Activated CD4-positive, alpha-beta T cell treated with anti-CD3 and anti-CD28 coated beads for 36 hours (primary cell): ENCODE measurements at regions of chr9 and their contacts with region 1.

Region 1: GRCh38 chr9:419571-420402 is 205.1 kb downstream of the DOCK8 start:
- DNase-seq: no peak
- ATAC-seq: no peak
- H3K4me3 Mint-ChIP-seq: no peak overlapping the region
- H3K27ac Mint-ChIP-seq: no peak overlapping the region
- H3K4me1 Mint-ChIP-seq: no peaks in the 10 kb centered on the region
- H3K27me3 Mint-ChIP-seq: no peaks in the 10 kb centered on the region

Region 2: DNA sequence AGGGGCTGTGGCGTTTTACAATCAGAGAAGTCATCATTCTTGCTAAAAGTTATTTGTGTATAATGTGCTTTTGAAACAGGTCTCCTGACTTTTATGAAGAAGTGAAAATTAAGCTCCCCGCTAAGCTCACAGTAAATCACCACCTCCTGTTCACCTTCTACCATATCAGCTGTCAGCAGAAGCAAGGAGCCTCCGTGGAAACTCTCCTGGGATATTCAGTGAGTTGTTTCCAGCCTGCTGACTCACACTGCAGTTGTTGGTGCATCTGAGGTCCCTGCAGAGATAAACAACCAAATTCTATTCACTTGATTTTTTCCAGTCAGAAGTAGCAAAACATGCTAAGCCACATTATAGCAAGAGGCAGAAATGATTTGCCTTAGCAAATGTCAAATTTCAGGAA is 48.4 kb before region 1 on chr9:
- CTCF ChIA-PET with region 1: no interaction called
- POLR2A ChIA-PET with region 1: no interaction called
- intact Hi-C with region 1: loop called in 1 of 2 experiments (anchors 5 kb)
- DNase-seq: no peak
- ATAC-seq: no peak
- H3K4me3 Mint-ChIP-seq: no peak overlapping the region
- H3K27ac Mint-ChIP-seq: peak overlapping the region; percentile 44
- H3K4me1 Mint-ChIP-seq: no peaks in the 10 kb centered on the region
- H3K27me3 Mint-ChIP-seq: no peaks in the 10 kb centered on the region

Region 3: GRCh38 chr9:441126-441525 is 21.3 kb after region 1 on chr9:
- CTCF ChIA-PET with region 1: interaction called, 3 read pairs
- POLR2A ChIA-PET with region 1: no interaction called
- intact Hi-C with region 1: loop called in 1 of 2 experiments (anchors 2 kb)
- DNase-seq: no peak
- ATAC-seq: no peak
- H3K4me3 Mint-ChIP-seq: no peak overlapping the region
- H3K27ac Mint-ChIP-seq: no peak overlapping the region
- H3K4me1 Mint-ChIP-seq: peaks cover 4% of the 10 kb centered on the region
- H3K27me3 Mint-ChIP-seq: no peaks in the 10 kb centered on the region

Region 4: DNA sequence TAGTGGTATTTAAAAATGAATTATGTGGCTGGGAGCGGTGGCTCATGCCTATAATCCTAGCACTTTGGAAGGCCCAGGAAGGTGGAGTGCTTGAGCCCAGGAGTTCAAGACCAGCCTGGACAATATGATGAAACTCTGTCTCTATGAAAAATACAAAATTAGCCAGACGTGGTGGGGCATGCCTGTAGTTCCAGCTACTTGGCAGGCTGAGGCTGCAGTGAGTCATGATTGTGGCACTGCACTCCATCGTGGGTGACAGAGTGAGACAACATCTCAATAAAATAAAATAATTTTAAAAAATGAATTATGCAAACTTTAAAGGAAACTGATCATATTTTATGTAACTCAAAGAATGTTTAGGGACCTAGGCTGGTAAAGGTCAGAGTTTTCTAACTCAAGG is 110.9 kb after region 1 on chr9:
- CTCF ChIA-PET with region 1: no interaction called
- POLR2A ChIA-PET with region 1: no interaction called
- intact Hi-C with region 1: no loop called
- DNase-seq: no peak
- ATAC-seq: no peak
- H3K4me3 Mint-ChIP-seq: no peak overlapping the region
- H3K27ac Mint-ChIP-seq: no peak overlapping the region
- H3K4me1 Mint-ChIP-seq: no peaks in the 10 kb centered on the region
- H3K27me3 Mint-ChIP-seq: peaks cover 4% of the 10 kb centered on the region

Region 5: GRCh38 chr9:696332-697323 is 276.8 kb after region 1 on chr9:
- CTCF ChIA-PET with region 1: no interaction called
- POLR2A ChIA-PET with region 1: no interaction called
- intact Hi-C with region 1: no loop called
- DNase-seq: no peak
- ATAC-seq: no peak
- H3K4me3 Mint-ChIP-seq: no peak overlapping the region
- H3K27ac Mint-ChIP-seq: no peak overlapping the region
- H3K4me1 Mint-ChIP-seq: peaks cover 4% of the 10 kb centered on the region
- H3K27me3 Mint-ChIP-seq: no peaks in the 10 kb centered on the region